Gastrocnemius medialis (tissue), 4 donors: ENCODE measurements at regions of chr1 and their contacts with region 1.

Region 1: GRCh38 chr1:161177112-161177935 is at the start of gene B4GALT3:
- DNase-seq: peak; percentile 84 to 85
- ATAC-seq: peak; percentile 92 to 94
- H3K4me3 ChIP-seq: peak within 1 kb of the TSS; percentile 72 to 92 (median 80)
- H3K27ac ChIP-seq: peak within 1 kb of the TSS; percentile 87 to 91 (median 89)
- H3K4me1 ChIP-seq: peaks cover 18 to 21% of the 10 kb centered on the region in 2 donors
- H3K27me3 ChIP-seq: no peaks in the 10 kb centered on the region
- CTCF ChIP-seq: no peak
- POLR2A ChIP-seq: peak; percentile 90 to 93
- total RNA-seq, gene B4GALT3: 35.5 to 47.7 (median 43.7) TPM

Region 2: GRCh38 chr1:161165742-161166668 is 11.3 kb before region 1 on chr1 and contains the start of gene PPOX:
- in situ Hi-C with region 1: no loop called
- intact Hi-C with region 1: loop called (anchors 1 kb)
- DNase-seq: peak; percentile 98
- ATAC-seq: peak; percentile 97 to 99
- H3K4me3 ChIP-seq: peak within 1 kb of the TSS; percentile 77 to 90 (median 82)
- H3K27ac ChIP-seq: peak within 1 kb of the TSS; percentile 85 to 94 (median 88)
- H3K4me1 ChIP-seq: peaks cover 22 to 26% of the 10 kb centered on the region in 2 donors
- H3K27me3 ChIP-seq: no peaks in the 10 kb centered on the region
- CTCF ChIP-seq: peak; percentile 20 to 57 (median 44)
- POLR2A ChIP-seq: peak; percentile 73 to 92
- total RNA-seq, gene PPOX: 4.0 to 14.7 (median 7.3) TPM

Region 3: DNA sequence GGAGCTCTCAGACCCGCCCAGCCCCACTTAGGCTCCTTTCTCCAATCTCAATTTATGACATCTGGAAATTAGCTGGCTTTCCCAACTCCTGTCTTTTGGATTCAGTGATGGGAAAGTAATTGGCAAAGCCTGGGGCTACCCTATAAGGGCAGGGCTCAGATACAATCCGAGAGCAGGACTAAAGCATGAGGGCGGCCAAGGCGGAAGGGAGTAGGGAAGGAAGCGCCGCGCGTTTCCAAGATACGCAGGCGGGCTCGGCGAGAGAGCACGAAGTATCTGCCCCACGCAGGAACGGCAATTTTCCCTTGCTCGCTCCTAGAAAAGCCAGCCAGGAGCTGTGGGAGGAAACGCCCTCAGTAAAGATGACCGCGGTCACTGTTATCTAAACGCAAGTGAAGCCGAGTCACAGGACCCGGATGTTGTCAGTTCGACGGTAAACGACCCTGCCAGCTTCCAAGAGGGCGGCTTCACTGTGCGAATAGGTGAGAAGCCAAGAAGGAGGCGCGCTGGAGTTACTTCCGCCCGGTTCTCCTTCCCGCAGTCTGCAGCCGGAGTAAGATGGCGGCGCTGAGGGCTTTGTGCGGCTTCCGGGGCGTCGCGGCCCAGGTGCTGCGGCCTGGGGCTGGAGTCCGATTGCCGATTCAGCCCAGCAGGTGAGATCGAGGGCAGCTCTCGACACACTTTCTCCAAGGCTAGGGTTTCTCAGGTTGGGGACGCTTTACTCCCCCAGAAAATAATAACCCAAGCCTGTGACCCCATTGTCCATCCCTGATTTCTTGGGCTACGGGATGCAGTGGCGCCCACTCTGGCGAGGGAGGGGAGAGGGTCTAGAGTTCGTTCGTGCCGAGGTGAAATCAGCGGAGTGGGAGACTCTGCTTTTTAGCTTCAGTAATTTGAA is 24.8 kb after region 1 on chr1 and contains the start of gene NDUFS2:
- in situ Hi-C with region 1: no loop called
- intact Hi-C with region 1: loop called (anchors 1 kb)
- DNase-seq: peak; percentile 99
- ATAC-seq: peak; percentile 97
- H3K4me3 ChIP-seq: peak within 1 kb of the TSS; percentile 66 to 93 (median 84)
- H3K27ac ChIP-seq: peak within 1 kb of the TSS; percentile 94 to 99 (median 98)
- H3K4me1 ChIP-seq: peaks cover 58 to 81% of the 10 kb centered on the region in 2 donors
- H3K27me3 ChIP-seq: no peaks in the 10 kb centered on the region
- CTCF ChIP-seq: peak in 1 of 5 experiments; percentile 18
- POLR2A ChIP-seq: peak; percentile 82 to 86
- total RNA-seq, gene NDUFS2: 206 to 260 (median 226) TPM